Panc1 (cell line): ENCODE measurements at regions of chr1 and their contacts with region 1.

Region 1: GRCh38 chr1:37890378-37891014 is 31.1 kb upstream of the MTF1 start:
- DNase-seq: peak; percentile 28
- ATAC-seq: 0 out of 2 replicates have a peak, but pooled peaks have one; percentile 66
- H3K4me3 ChIP-seq: no peak overlapping the region
- H3K27ac ChIP-seq: no peak overlapping the region
- H3K4me1 ChIP-seq: no peaks in the 10 kb centered on the region
- H3K27me3 ChIP-seq: no peaks in the 10 kb centered on the region
- CTCF ChIP-seq: peak; percentile 68; the same call in 1 of the 2 replicates

Region 2: DNA sequence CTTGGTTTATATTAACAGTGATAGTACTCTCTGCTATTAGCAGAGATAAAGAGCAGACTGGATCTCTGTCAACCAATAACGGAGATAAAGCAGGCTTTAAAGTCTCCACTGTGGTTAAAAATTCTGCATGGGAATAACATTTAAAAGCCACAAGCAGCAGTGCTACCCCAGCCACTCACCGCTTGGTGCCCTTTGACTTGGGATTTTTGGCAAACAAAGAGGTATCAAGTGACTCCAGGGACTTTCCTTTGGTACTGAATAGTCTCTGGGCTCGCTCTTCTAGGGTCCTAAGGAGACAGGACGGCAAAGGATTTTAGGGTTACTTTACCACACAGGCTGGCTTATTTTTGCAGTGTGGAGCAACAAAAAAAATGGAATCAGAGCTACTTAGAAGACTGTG is 88.0 kb after region 1 on chr1:
- CTCF ChIA-PET with region 1: no interaction called
- POLR2A ChIA-PET with region 1: no interaction called
- in situ Hi-C with region 1: no loop called
- intact Hi-C with region 1: loop called (anchors 10 kb)
- DNase-seq: no peak
- ATAC-seq: no peak
- H3K4me3 ChIP-seq: no peak overlapping the region
- H3K27ac ChIP-seq: no peak overlapping the region
- H3K4me1 ChIP-seq: no peaks in the 10 kb centered on the region
- H3K27me3 ChIP-seq: no peaks in the 10 kb centered on the region
- CTCF ChIP-seq: no peak